B cell (primary cell): ENCODE measurements at regions of chr2 and their contacts with region 1.

Region 1: DNA sequence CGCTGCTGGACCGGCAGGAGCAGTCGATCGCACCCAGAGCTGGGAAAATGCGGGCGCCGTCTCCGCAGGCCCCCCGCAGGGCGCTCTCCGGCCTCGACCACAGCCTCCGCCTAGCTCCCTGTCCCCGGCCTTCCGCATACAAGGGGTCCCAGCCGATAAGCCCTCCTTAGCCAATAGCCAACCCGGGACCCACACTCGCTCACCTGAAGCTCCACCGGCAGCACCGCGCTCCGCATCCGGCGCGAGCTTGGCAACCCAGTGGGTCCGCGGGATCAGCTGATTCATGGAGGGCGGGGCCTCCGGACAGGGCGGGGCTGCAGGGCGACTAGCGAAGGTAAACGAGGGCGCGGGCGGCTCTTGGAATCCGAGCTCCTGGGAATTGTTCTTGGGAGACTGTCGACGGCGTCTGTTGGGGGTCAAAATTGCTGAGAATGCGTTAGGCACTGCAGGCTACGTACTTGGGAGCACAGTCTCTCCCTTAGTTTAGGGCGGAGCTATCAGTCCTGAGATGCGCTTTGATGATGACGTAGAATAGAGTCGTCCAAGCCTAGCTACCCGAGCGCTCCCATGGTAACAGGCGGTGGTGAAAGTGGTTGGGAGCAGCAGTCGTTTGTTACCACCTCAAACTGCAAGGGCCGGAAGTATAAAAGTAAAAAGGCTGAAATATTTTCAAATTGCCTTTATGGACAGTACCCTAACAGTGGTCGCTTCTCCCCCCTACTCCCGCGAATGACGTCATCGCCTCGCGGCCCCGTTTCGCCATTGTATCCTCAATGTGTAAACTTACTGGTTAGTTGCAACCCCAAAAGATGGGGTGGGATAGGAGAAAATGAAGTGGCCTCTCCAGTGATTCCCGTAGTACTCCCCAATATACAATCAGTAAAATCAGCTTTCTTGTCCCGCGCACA is at the start of gene ALS2:
- DNase-seq: peak; percentile 97
- ATAC-seq: peak; percentile 92
- H3K4me3 ChIP-seq: peak within 1 kb of the TSS; percentile 80 to 99 (median 88)
- H3K4me3 Mint-ChIP-seq: peak within 1 kb of the TSS; percentile 98
- H3K27ac ChIP-seq: peak within 1 kb of the TSS; percentile 77 to 84
- H3K27ac Mint-ChIP-seq: peak within 1 kb of the TSS; percentile 94
- H3K4me1 ChIP-seq: peaks cover 13 to 15% of the 10 kb centered on the region in 2 donors
- H3K4me1 Mint-ChIP-seq: peaks cover 16% of the 10 kb centered on the region
- H3K27me3 ChIP-seq: peaks cover 0 to 12% (median 0%) of the 10 kb centered on the region in 4 experiments
- H3K27me3 Mint-ChIP-seq: peaks cover 10% of the 10 kb centered on the region
- CTCF ChIP-seq: no peak
- total RNA-seq, gene ALS2: 15.8 and 16.7 TPM in 2 replicates

Region 2: GRCh38 chr2:200525882-200526651 is 1254.9 kb before region 1 on chr2 and contains the start of gene SGO2:
- CTCF ChIA-PET with region 1: no interaction called
- POLR2A ChIA-PET with region 1: no interaction called
- intact Hi-C with region 1: loop called (anchors 2 kb)
- DNase-seq: peak; percentile 95
- ATAC-seq: peak; percentile 100
- H3K4me3 ChIP-seq: peak within 1 kb of the TSS; percentile 75 to 93 (median 87)
- H3K4me3 Mint-ChIP-seq: peak within 1 kb of the TSS; percentile 93
- H3K27ac ChIP-seq: peak within 1 kb of the TSS in 1 of 2 donors; percentile 57
- H3K27ac Mint-ChIP-seq: peak within 1 kb of the TSS; percentile 83
- H3K4me1 ChIP-seq: peaks cover 7 to 9% of the 10 kb centered on the region in 2 donors
- H3K4me1 Mint-ChIP-seq: peaks cover 12% of the 10 kb centered on the region
- H3K27me3 ChIP-seq: peaks cover 0 to 6% (median 0%) of the 10 kb centered on the region in 4 experiments
- H3K27me3 Mint-ChIP-seq: peaks cover 8% of the 10 kb centered on the region
- CTCF ChIP-seq: no peak
- total RNA-seq, gene SGO2: 4.0 and 5.3 TPM in 2 replicates

Region 3: GRCh38 chr2:200864176-200864976 is 916.6 kb before region 1 on chr2 and contains the start of gene CLK1:
- CTCF ChIA-PET with region 1: no interaction called
- POLR2A ChIA-PET with region 1: interaction called, 5 read pairs
- intact Hi-C with region 1: loop called (anchors 2 kb)
- DNase-seq: peak; percentile 97
- ATAC-seq: peak; percentile 85
- H3K4me3 ChIP-seq: peak within 1 kb of the TSS; percentile 85 to 100 (median 97)
- H3K4me3 Mint-ChIP-seq: peak within 1 kb of the TSS; percentile 93
- H3K27ac ChIP-seq: peak within 1 kb of the TSS; percentile 98 to 99
- H3K27ac Mint-ChIP-seq: peak within 1 kb of the TSS; percentile 100
- H3K4me1 ChIP-seq: peaks cover 27 to 31% of the 10 kb centered on the region in 2 donors
- H3K4me1 Mint-ChIP-seq: peaks cover 41% of the 10 kb centered on the region
- H3K27me3 ChIP-seq: no peaks in the 10 kb centered on the region
- H3K27me3 Mint-ChIP-seq: no peaks in the 10 kb centered on the region
- CTCF ChIP-seq: no peak
- total RNA-seq, gene CLK1: 396 and 409 TPM in 2 replicates

Region 4: DNA sequence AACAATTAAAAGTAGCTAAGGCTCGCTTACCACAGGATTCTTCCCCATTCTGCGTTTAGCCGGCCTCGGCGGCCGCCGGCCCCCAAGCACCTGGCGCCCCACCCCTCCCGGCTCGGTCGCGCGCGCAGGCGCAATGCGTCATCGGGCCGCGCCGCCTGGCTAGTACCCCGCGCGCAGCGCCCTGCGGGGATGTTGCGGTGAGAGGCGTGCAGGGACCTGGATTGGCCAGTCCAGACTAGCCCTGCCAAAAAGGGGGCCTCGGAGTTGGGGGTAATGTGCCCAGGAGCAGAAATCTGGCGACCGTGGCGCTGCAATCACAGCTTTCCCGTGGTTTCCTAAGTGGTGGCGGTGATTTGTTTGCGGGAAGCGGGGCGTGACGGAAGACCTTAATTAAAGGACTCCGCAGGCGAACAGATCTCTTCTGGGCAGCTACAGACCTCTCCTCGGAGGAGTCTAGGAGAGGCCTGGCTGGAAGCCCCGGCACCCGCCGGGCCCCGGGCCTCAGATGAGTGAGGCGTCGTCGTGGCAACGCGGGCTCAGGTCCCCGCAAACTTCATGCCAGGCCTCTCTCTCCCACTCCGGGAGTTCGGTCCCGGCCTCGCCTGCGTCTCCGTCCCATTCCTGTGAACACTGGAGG is 138.2 kb before region 1 on chr2:
- CTCF ChIA-PET with region 1: interaction called, 8 read pairs
- POLR2A ChIA-PET with region 1: interaction called, 3 read pairs
- intact Hi-C with region 1: loop called (anchors 1 kb)
- DNase-seq: peak; percentile 92
- ATAC-seq: peak; percentile 86
- H3K4me3 ChIP-seq: peak overlapping the region; percentile 73 to 100 (median 95)
- H3K4me3 Mint-ChIP-seq: peak overlapping the region; percentile 96
- H3K27ac ChIP-seq: peak overlapping the region; percentile 89 to 93
- H3K27ac Mint-ChIP-seq: peak overlapping the region; percentile 97
- H3K4me1 ChIP-seq: peaks cover 10 to 14% of the 10 kb centered on the region in 2 donors
- H3K4me1 Mint-ChIP-seq: peaks cover 12% of the 10 kb centered on the region
- H3K27me3 ChIP-seq: peaks cover 0 to 2% (median 0%) of the 10 kb centered on the region in 4 experiments
- H3K27me3 Mint-ChIP-seq: peaks cover 7% of the 10 kb centered on the region
- CTCF ChIP-seq: no peak

Region 5: GRCh38 chr2:201795607-201796477 is 14.9 kb after region 1 on chr2:
- CTCF ChIA-PET with region 1: no interaction called
- POLR2A ChIA-PET with region 1: no interaction called
- intact Hi-C with region 1: no loop called
- DNase-seq: no peak
- ATAC-seq: no peak
- H3K4me3 ChIP-seq: no peak overlapping the region
- H3K4me3 Mint-ChIP-seq: no peak overlapping the region
- H3K27ac ChIP-seq: no peak overlapping the region
- H3K27ac Mint-ChIP-seq: no peak overlapping the region
- H3K4me1 ChIP-seq: no peaks in the 10 kb centered on the region
- H3K4me1 Mint-ChIP-seq: no peaks in the 10 kb centered on the region
- H3K27me3 ChIP-seq: peaks cover 0 to 5% (median 0%) of the 10 kb centered on the region in 4 experiments
- H3K27me3 Mint-ChIP-seq: peaks cover 17% of the 10 kb centered on the region
- CTCF ChIP-seq: peak; percentile 27

Region 6: GRCh38 chr2:202238234-202239197 is 457.6 kb after region 1 on chr2 and contains the start of gene SUMO1:
- CTCF ChIA-PET with region 1: no interaction called
- POLR2A ChIA-PET with region 1: no interaction called
- intact Hi-C with region 1: loop called (anchors 1 kb)
- DNase-seq: peak; percentile 92
- ATAC-seq: peak; percentile 95
- H3K4me3 ChIP-seq: peak within 1 kb of the TSS; percentile 75 to 88 (median 83)
- H3K4me3 Mint-ChIP-seq: peak within 1 kb of the TSS; percentile 96
- H3K27ac ChIP-seq: peak within 1 kb of the TSS; percentile 78 to 89
- H3K27ac Mint-ChIP-seq: peak within 1 kb of the TSS; percentile 91
- H3K4me1 ChIP-seq: peaks cover 12 to 21% of the 10 kb centered on the region in 2 donors
- H3K4me1 Mint-ChIP-seq: peaks cover 32% of the 10 kb centered on the region
- H3K27me3 ChIP-seq: peaks cover 0 to 1% (median 0%) of the 10 kb centered on the region in 4 experiments
- H3K27me3 Mint-ChIP-seq: no peaks in the 10 kb centered on the region
- CTCF ChIP-seq: no peak
- total RNA-seq, gene SUMO1: 49.1 and 60.0 TPM in 2 replicates

Region 7: DNA sequence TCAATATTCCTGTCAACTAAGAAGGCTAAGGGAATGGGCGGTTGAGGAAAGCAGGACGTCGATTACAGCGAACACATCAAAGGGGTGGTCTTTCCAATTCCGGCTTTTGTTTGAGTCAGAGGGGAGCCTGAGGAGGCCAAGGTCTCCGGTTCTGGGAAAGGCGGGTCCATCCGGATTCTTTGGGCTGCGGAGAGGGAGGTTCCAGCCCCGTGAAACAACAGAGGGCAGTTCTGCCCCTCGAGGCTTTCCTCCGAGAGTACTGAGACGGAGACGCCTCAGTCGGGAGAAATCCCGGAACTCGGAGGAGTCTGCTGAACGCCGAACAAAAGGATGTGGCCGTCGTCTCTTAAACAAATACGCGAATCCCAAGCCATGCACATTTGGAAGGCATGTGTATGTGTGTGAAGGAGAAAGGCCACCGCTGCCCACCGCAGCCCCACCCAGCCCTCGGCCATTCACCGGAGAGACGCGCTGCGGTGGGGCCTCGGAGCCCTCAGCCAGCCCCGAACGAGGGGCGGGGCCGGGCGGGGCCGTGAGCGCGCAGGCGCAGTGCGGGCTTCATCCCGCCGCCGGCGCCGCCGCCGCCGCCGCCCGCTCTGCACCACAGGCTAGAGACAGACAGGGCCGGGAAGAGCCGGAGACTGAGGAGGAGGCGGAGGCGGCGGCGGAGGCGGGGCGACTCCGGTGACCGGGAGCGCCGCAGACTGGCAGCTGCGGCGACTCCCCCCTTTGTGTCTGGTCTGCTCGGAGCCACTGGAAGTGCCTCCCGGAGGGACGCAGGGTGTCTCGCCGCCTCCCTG is 594.9 kb after region 1 on chr2 and contains the start of gene BMPR2:
- CTCF ChIA-PET with region 1: no interaction called
- POLR2A ChIA-PET with region 1: no interaction called
- intact Hi-C with region 1: loop called (anchors 2 kb)
- DNase-seq: peak; percentile 91
- ATAC-seq: peak; percentile 78
- H3K4me3 ChIP-seq: peak within 1 kb of the TSS; percentile 72 to 96 (median 91)
- H3K4me3 Mint-ChIP-seq: peak within 1 kb of the TSS; percentile 98
- H3K27ac ChIP-seq: peak within 1 kb of the TSS; percentile 58 to 67
- H3K27ac Mint-ChIP-seq: peak within 1 kb of the TSS; percentile 93
- H3K4me1 ChIP-seq: peaks cover 13 to 24% of the 10 kb centered on the region in 2 donors
- H3K4me1 Mint-ChIP-seq: peaks cover 26% of the 10 kb centered on the region
- H3K27me3 ChIP-seq: no peaks in the 10 kb centered on the region
- H3K27me3 Mint-ChIP-seq: no peaks in the 10 kb centered on the region
- CTCF ChIP-seq: no peak
- total RNA-seq, gene BMPR2: 24.6 and 27.2 TPM in 2 replicates